Right ventricle myocardium superior (tissue), 1 donor: ENCODE measurements at regions of chr3 and their contacts with region 1.

Region 1: DNA sequence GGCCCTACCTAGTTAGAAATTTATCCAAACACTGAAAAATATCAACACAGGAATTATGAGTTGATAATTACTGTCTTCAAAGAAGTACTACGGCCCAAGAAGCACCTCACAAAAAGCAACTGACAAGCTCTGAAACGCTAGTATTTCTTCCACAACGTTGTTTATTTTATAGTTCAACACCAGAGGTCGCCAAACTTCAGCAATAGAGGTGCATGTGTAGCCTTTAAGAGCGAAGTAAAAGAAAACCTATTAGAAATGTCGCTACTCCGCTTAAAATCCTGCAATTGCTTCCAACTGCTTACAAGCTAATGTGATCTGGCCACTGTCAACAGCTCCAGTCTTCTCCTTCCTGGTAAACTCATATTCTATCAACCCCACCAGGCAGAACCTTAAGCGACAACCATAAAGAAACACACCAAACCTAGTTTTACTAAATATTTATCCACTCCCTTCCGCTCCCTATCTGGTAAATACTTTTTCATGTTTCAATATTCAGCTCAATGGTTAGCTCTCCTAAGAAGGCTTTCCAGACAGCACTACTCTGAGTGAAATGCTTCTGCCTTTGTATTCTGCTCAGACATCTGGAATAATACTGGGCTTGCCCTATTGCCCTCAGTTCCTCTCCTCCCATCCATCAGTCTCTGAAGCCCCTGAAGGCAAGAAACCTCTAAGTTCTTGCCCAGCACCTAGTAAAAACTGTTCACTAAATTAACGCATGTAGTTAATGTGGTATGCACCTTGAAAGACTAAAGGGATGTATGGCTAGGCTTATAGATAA is 110.2 kb downstream of the NR1I2 start:
- DNase-seq: no peak
- ATAC-seq: peak; percentile 88

Region 2: GRCh38 chr3:120095226-120095978 is 203.3 kb after region 1 on chr3:
- intact Hi-C with region 1: loop called (anchors 10 kb)
- DNase-seq: peak; percentile 94
- ATAC-seq: peak; percentile 69

Region 3: DNA sequence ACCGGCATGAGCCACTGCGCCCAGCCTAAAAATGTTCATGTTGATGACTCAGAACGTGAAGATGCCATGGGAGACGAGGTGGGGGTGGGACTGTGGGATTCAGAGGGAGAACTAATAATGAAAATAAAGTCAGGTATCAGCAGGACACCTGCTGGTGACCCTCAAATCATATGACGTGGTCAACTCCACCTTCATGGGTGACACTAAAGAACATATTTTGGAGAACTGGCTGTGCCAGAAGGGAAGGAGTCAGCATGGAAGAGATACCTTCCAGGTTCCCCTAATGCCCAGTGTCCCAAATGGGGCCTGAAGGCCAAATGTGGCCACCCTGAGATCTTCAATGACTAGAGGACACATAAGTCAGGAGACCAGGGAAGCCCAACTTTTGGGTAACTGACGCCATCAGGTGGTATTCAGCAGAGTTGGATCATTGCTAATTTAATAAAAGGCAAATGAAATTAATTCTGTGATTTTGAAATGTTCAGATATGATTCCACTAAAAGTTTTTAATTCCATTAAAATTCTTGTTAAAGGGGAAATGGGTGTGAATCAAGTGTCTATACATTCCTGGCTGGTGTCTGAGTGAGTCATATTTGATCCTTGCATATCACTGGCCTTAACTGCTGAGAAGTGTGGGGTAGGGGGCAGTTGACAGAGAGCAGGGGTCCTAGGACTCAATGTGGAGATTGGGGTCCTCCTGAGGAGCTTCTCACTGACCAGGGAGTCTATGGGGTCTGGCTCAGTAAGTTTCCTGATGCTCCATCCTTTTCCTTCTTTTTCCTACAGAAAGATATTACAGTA is 290.8 kb after region 1 on chr3:
- intact Hi-C with region 1: loop called (anchors 5 kb)
- DNase-seq: no peak
- ATAC-seq: peak; percentile 52